ENCODE measurements at regions of chr16 and their contacts with region 1.

Region 1: GRCh38 chr16:88803264-88803987 is at the start of gene CDT1:
- DNase-seq: peak; percentile 91 to 99 (median 96)
- ATAC-seq: peak; percentile 6
- H3K4me3 ChIP-seq: peak within 1 kb of the TSS; percentile 89
- H3K27ac ChIP-seq: peak within 1 kb of the TSS; percentile 86
- H3K4me1 ChIP-seq: peaks cover 29 to 85% of the 10 kb centered on the region in 2 experiments
- H3K27me3 ChIP-seq: no peaks in the 10 kb centered on the region; a peak in 1 of 5 replicates
- CTCF ChIP-seq: no peak
- EP300 ChIP-seq: no peak
- POLR2A ChIP-seq: peak; percentile 71
- RAD21 ChIP-seq: no peak
- polyA plus RNA-seq, gene CDT1: 0.92 to 1.6 TPM

Region 2: DNA sequence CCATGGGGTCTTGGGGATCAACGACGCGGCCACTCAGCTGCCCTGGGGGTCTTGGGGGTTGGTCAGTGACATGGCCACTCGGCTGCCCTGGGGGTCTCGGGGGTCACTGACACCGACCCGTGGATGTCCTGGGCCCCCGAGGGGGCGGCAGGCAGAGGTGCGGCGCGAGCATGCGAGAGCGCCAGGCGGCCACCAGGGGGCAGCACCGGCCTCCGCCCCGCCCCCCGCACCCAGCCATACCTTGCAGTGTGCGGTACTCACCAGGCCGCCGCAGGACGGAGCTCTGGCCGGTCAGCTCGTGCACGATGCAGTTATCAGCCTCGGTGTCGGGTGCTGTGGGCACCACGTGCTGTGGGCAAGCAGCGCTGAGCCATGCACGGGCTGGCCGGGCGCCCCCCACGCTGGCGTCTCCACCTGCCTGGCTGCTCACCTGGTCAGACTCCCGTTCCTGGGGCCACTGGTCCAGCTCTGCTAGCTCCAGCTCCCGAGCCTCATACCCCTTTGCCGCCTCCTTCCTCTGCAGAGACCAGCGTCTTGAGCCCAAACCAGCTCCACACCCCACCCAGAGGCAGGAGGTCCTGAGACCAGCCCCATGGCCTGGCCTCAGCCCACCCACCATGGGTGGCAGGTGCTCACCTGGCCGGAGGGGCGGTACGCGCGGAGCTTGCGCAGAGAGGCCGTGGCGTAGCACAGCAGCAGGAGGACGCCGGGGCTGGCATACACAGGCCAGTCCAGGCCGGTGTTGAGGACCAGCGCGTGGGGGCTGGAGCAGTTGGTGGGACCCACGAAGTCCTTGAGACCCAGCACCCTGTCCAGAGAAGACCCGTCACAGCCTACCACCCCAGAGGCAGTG is 65.9 kb before region 1 on chr16:
- CTCF ChIA-PET with region 1: interaction called, 3 read pairs
- POLR2A ChIA-PET with region 1: interaction called, 17 read pairs
- in situ Hi-C with region 1: no loop called
- intact Hi-C with region 1: no loop called
- DNase-seq: peak; percentile 92 to 97 (median 93)
- ATAC-seq: peak; percentile 97
- H3K4me3 ChIP-seq: no peak overlapping the region
- H3K27ac ChIP-seq: no peak overlapping the region
- H3K4me1 ChIP-seq: peaks cover 0 to 94% of the 10 kb centered on the region in 2 experiments; a peak in 3 of 5 replicates
- H3K27me3 ChIP-seq: no peaks in the 10 kb centered on the region
- CTCF ChIP-seq: peak; percentile 97 to 99 (median 99)
- EP300 ChIP-seq: peak; percentile 35; the same call in 1 of the 2 replicates
- POLR2A ChIP-seq: peak; percentile 47
- RAD21 ChIP-seq: peak; percentile 93 to 94

Region 3: GRCh38 chr16:89560378-89561141 is 757.1 kb after region 1 on chr16 and contains the start of gene RPL13:
- CTCF ChIA-PET with region 1: no interaction called
- POLR2A ChIA-PET with region 1: no interaction called
- in situ Hi-C with region 1: no loop called
- intact Hi-C with region 1: loop called (anchors 10 kb)
- DNase-seq: peak; percentile 93 to 97 (median 95)
- ATAC-seq: peak; percentile 85
- H3K4me3 ChIP-seq: peak within 1 kb of the TSS; percentile 84
- H3K27ac ChIP-seq: peak within 1 kb of the TSS; percentile 94
- H3K4me1 ChIP-seq: peaks cover 35 to 62% of the 10 kb centered on the region in 2 experiments; a peak in 4 of 5 replicates
- H3K27me3 ChIP-seq: no peaks in the 10 kb centered on the region; a peak in 1 of 5 replicates
- CTCF ChIP-seq: peak in 1 of 3 experiments; percentile 12; a peak in 1 of 6 replicates
- EP300 ChIP-seq: no peak
- POLR2A ChIP-seq: peak; percentile 99
- RAD21 ChIP-seq: no peak
- polyA plus RNA-seq, gene RPL13: 227 to 348 TPM